Dorsolateral prefrontal cortex (tissue), 120 donors: ENCODE measurements at regions of chr1 and their contacts with region 1.

Region 1: GRCh38 chr1:6401673-6402072 is 8.1 kb upstream of the ACOT7 start:
- DNase-seq: no peak
- H3K4me3 ChIP-seq: no peak overlapping the region
- H3K27ac ChIP-seq: no peak overlapping the region
- H3K27me3 ChIP-seq: peaks cover 0 to 5% (median 0%) of the 10 kb centered on the region in 45 donors
- CTCF ChIP-seq: no peak

Region 2: DNA sequence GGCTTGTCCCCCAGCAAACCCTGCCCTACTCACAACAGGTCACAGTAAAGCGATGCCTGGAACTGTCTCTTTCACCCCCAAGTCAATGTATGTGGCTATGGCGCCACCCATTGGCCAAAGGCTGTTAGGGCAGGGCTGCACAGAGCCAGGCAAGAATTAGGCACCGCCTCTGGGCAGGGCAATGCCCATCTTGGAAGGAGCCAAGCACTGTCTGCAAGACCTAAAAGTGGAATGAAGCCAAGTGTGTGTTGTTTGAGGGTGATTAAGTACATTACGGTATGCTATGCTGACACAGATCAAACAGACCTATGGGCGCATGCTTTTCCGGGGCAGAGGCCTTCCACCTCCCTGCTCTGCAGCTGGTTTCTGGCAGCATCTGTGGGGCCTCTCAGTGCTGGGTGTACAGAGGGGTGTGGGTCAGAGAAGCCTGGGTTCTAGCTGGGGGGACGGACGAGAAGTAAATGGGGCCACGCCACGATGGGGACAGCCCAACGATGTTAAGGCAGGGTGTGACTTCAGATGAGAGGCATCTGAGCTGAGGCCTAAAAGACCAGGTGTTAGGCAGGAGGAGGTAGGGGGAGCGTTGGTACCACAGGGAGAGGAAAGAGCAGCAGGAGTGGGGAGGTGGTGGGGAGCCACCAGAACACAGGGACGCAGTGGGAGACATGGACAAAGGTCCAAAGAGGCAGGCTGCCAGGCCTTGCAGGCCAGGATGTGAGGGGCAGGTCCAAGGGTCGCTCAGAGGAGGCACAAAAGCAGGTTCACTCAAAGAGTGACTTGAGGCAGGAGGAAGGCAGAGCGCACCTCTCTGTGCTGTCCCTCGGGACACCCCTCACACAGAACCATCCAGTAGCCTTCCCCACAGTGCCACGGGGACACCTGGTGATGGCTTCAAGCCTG is 57.9 kb before region 1 on chr1:
- intact Hi-C with region 1: loop called in 1 of 2 experiments (anchors 2 kb)
- DNase-seq: peak in 8 of 10 donors; percentile 40 to 72 (median 67)
- H3K4me3 ChIP-seq: no peak overlapping the region
- H3K27ac ChIP-seq: no peak overlapping the region
- H3K27me3 ChIP-seq: no peaks in the 10 kb centered on the region
- CTCF ChIP-seq: peak; percentile 40 to 88 (median 74)

Region 3: GRCh38 chr1:6359216-6360116 is 42.2 kb before region 1 on chr1:
- intact Hi-C with region 1: loop called (anchors 2 kb)
- DNase-seq: no peak
- H3K4me3 ChIP-seq: peak overlapping the region in 4 of 59 donors; percentile 1 to 6 (median 4)
- H3K27ac ChIP-seq: peak overlapping the region in 17 of 59 donors; percentile 5 to 79 (median 36)
- H3K27me3 ChIP-seq: no peaks in the 10 kb centered on the region
- CTCF ChIP-seq: no peak

Region 4: DNA sequence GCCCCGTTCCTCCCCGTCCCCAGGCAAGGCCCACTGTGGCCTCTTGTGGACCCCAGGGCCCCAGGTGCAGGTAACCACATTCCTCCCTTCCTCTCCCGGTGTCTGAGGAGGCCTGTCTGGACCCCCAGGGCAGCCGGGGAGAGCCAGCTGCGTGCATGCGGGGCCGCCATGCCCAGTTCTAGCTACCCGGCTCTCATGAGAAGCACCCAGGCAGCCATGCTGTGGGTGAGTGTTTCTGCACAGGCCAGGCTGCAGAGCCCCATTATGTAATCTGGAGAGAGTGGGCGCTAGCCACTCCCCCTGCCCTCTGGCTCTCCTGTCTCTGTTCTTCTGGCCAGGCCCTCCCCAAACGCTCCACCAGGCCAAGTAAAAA is 108.2 kb after region 1 on chr1:
- intact Hi-C with region 1: no loop called
- DNase-seq: no peak
- H3K4me3 ChIP-seq: no peak overlapping the region
- H3K27ac ChIP-seq: peak overlapping the region in 17 of 59 donors; percentile 21 to 83 (median 46)
- H3K27me3 ChIP-seq: peaks cover 0 to 11% (median 0%) of the 10 kb centered on the region in 45 donors
- CTCF ChIP-seq: no peak